ENCODE measurements at regions of chr21 and their contacts with region 1.

Region 1: DNA sequence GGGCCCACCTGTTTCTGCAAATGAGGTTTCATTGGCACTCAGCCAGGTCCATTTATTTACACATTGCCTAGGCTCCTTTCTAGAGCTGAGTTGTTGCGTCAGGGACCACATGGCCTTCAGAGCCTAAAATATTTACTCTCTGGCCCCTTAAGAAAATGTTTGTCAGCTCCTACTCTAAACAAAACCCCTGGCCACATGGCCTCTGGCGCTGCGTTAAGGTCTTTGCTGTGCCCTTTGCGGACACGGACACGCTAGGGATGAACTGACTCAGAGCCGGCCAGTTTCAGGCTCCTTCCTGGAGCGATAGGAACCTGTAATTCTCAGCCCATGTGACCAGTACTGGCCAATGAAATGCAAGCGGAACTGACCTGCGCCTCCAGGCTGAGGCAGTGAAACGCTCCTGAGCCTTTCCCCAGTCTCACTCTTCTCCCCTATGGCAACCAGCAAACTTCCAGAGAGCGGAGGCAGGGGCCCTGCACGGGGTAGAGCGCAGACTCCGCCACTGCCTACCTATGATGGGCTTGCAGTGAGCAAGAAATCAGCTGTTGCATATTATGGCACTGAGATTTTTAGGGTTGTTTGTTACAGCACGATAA is 160.3 kb downstream of the ETS2 start:
- DNase-seq: peak; percentile 80
- H3K4me3 ChIP-seq: no peak overlapping the region
- H3K27ac ChIP-seq: peak overlapping the region; percentile 55 to 79 (median 66)
- H3K4me1 ChIP-seq: peaks cover 0 to 12% (median 4%) of the 10 kb centered on the region in 4 donors
- H3K27me3 ChIP-seq: no peaks in the 10 kb centered on the region
- CTCF ChIP-seq: no peak
- EP300 ChIP-seq: no peak
- POLR2A ChIP-seq: peak; percentile 60

Region 2: DNA sequence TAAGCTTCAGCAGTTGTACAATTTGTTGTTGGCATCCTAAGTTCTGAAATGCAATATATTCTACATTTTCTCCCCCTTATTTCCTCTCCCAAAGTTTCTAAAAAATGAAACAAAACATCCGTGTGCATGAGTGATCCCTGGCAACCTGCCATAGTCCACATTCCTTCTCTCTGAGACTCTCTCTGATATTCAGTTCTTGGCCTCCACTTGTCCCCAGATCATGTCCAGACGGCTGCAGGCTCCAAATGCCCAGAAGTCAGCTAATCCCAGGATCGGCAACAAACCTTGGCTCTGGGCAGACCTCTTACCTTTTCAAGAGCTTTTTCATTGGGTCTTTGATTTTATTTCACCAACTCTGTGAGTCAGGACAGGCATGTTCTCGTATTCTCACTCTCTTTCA is 27.6 kb after region 1 on chr21:
- in situ Hi-C with region 1: no loop called
- intact Hi-C with region 1: loop called (anchors 1 kb)
- DNase-seq: peak; percentile 45
- H3K4me3 ChIP-seq: no peak overlapping the region
- H3K27ac ChIP-seq: peak overlapping the region; percentile 8 to 53 (median 47)
- H3K4me1 ChIP-seq: peaks cover 19 to 58% (median 29%) of the 10 kb centered on the region in 4 donors
- H3K27me3 ChIP-seq: no peaks in the 10 kb centered on the region
- CTCF ChIP-seq: no peak
- EP300 ChIP-seq: no peak
- POLR2A ChIP-seq: no peak

Measured in transverse colon (tissue), 4 donors.